ENCODE measurements at regions of chr3 and their contacts with region 1.

Region 1: DNA sequence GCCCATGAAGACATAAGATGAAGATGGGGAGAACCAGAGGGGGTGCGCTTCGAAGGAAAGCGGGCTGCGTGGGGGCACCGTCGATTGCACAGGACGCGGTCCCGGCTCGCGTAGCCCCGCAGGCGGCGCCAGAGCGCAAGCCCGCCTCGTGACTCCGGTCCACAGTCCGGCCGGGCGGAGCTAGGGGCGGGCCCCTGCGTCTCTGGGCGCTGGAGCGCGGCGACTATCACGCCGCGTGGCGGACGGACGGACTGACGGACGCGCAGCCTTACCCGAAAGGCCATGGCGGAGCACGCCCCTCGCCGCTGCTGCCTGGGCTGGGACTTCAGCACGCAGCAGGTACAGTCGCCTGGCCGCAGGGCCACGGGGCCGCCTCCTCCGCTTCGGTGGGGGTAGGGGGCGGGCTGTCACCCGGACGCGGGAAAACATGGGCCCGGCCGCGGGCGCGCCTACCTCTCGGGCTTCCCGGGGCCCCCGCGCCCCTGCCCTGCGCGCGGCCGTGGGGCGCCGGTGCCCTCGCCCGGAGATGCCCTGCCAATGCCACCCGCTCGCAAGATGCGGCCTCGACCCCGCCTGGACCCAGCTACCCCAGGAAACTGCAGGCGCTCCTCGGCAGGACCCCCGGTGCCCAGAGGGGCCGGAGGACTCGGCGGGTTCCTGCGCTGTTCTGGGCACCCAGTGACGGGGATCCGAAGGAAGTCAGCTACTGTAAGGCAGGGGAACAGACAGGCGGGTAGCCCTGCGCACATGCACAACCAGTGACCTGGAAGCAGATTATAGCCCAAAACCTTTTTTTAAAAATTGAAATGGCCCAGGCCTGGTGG is at the start of gene XYLB:
- DNase-seq: peak; percentile 54 to 77 (median 65)
- H3K4me3 ChIP-seq: peak within 1 kb of the TSS; percentile 59
- H3K4me3 Mint-ChIP-seq: peak within 1 kb of the TSS; percentile 74 to 93 (median 83)
- H3K27ac ChIP-seq: peak within 1 kb of the TSS; percentile 63
- H3K27ac Mint-ChIP-seq: peak within 1 kb of the TSS in 3 of 8 donors; percentile 45 to 81 (median 66)
- H3K4me1 ChIP-seq: no peaks in the 10 kb centered on the region
- H3K4me1 Mint-ChIP-seq: peaks cover 0 to 10% (median 2%) of the 10 kb centered on the region in 3 donors
- H3K27me3 ChIP-seq: no peaks in the 10 kb centered on the region
- H3K27me3 Mint-ChIP-seq: peaks cover 0 to 6% of the 10 kb centered on the region in 2 donors
- total RNA-seq, gene XYLB: 5.7 to 6.2 TPM

Region 2: GRCh38 chr3:37974121-37975083 is 372.4 kb before region 1 on chr3:
- CTCF ChIA-PET with region 1: interaction called, 13 read pairs
- POLR2A ChIA-PET with region 1: no interaction called
- DNase-seq: peak; percentile 56 to 80 (median 60)
- H3K4me3 ChIP-seq: no peak overlapping the region
- H3K4me3 Mint-ChIP-seq: no peak overlapping the region
- H3K27ac ChIP-seq: no peak overlapping the region
- H3K27ac Mint-ChIP-seq: peak overlapping the region in 2 of 8 donors; percentile 22 to 52
- H3K4me1 ChIP-seq: no peaks in the 10 kb centered on the region
- H3K4me1 Mint-ChIP-seq: peaks cover 4 to 5% (median 4%) of the 10 kb centered on the region in 3 donors
- H3K27me3 ChIP-seq: no peaks in the 10 kb centered on the region
- H3K27me3 Mint-ChIP-seq: peaks cover 0 to 1% of the 10 kb centered on the region in 2 donors

Region 3: GRCh38 chr3:38210141-38210757 is 136.6 kb before region 1 on chr3:
- CTCF ChIA-PET with region 1: no interaction called
- POLR2A ChIA-PET with region 1: no interaction called
- DNase-seq: no peak
- H3K4me3 ChIP-seq: no peak overlapping the region
- H3K4me3 Mint-ChIP-seq: peak overlapping the region in 5 of 7 donors; percentile 7 to 47 (median 38)
- H3K27ac ChIP-seq: no peak overlapping the region
- H3K27ac Mint-ChIP-seq: peak overlapping the region in 6 of 8 donors; percentile 10 to 82 (median 54)
- H3K4me1 ChIP-seq: no peaks in the 10 kb centered on the region
- H3K4me1 Mint-ChIP-seq: peaks cover 51 to 86% (median 78%) of the 10 kb centered on the region in 3 donors
- H3K27me3 ChIP-seq: no peaks in the 10 kb centered on the region
- H3K27me3 Mint-ChIP-seq: no peaks in the 10 kb centered on the region

Region 4: DNA sequence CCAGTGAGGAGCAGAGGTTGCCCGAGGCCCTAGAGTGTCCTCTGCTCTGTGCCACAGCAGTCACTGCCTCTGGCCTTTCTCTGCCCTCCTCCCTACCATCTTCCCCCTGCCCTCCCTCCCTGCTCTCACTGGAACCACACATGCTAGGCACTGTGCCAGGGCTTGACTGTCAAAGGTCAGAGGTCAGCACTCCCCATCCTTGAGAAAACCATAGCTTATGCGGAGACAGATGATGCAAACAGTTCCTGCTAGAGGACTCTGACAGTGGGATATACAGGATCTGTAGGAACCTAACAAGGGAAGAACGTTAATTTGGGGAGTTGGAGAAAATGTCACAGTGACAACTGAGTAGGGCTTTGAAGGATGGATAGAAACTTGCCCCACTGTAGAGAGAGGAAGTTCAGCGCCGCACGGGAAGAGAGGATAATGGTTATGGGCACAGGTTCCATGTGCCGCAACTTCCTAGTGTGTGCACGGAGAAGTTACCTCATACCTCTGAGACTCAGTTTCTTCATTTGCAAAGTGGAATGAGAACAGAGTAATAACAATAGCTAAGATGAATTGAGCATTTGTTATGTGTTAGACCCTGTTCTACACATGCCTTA is 29.5 kb before region 1 on chr3:
- CTCF ChIA-PET with region 1: no interaction called
- POLR2A ChIA-PET with region 1: no interaction called
- DNase-seq: no peak
- H3K4me3 ChIP-seq: no peak overlapping the region
- H3K4me3 Mint-ChIP-seq: no peak overlapping the region
- H3K27ac ChIP-seq: no peak overlapping the region
- H3K27ac Mint-ChIP-seq: peak overlapping the region in 1 of 8 donors; percentile 55
- H3K4me1 ChIP-seq: no peaks in the 10 kb centered on the region
- H3K4me1 Mint-ChIP-seq: no peaks in the 10 kb centered on the region
- H3K27me3 ChIP-seq: no peaks in the 10 kb centered on the region
- H3K27me3 Mint-ChIP-seq: peaks cover 1 to 7% of the 10 kb centered on the region in 2 donors

Region 5: DNA sequence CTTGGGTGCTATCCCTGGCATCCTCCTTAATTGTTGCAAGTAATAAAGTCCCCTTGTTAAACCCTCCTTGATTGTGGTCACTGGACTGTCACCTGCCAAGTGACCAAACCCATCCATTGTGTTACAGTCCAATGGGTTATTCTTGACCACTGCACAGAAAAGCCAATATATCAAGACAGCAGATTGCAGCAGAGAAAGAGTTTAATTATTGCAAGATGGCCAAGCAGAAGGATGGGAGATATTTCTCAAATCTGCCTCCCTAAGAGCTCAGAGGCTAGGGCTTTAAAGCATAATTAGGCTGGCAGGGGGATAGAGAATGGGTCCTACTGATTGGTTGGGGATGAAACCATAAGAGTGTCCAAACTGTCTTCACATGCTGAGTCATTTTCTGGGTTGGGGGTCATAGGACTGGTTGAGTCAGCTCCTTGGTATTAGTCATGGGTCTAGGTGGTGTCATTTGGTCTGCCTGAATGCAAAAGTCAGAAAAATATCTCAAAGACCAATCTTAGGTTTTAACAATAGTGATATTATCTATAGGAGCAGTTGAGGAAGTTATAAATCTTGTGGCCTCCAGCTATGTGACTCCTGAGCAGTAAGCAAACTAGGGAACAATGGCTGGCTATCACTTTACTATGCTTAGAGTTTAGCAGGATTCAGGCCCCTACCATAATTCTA is 19.3 kb before region 1 on chr3:
- CTCF ChIA-PET with region 1: interaction called, 20 read pairs
- POLR2A ChIA-PET with region 1: no interaction called
- DNase-seq: no peak
- H3K4me3 ChIP-seq: no peak overlapping the region
- H3K4me3 Mint-ChIP-seq: no peak overlapping the region
- H3K27ac ChIP-seq: no peak overlapping the region
- H3K27ac Mint-ChIP-seq: no peak overlapping the region
- H3K4me1 ChIP-seq: no peaks in the 10 kb centered on the region
- H3K4me1 Mint-ChIP-seq: no peaks in the 10 kb centered on the region
- H3K27me3 ChIP-seq: no peaks in the 10 kb centered on the region
- H3K27me3 Mint-ChIP-seq: peaks cover 12 to 29% of the 10 kb centered on the region in 2 donors

Region 6: GRCh38 chr3:38454884-38455638 is 108.3 kb after region 1 on chr3:
- CTCF ChIA-PET with region 1: interaction called, 11 read pairs
- POLR2A ChIA-PET with region 1: no interaction called
- DNase-seq: peak in 4 of 5 donors; percentile 16 to 54 (median 38)
- H3K4me3 ChIP-seq: peak overlapping the region; percentile 47
- H3K4me3 Mint-ChIP-seq: peak overlapping the region; percentile 91 to 97 (median 96)
- H3K27ac ChIP-seq: peak overlapping the region; percentile 55
- H3K27ac Mint-ChIP-seq: peak overlapping the region in 5 of 8 donors; percentile 23 to 89 (median 55)
- H3K4me1 ChIP-seq: peaks cover 21% of the 10 kb centered on the region
- H3K4me1 Mint-ChIP-seq: peaks cover 13 to 32% (median 14%) of the 10 kb centered on the region in 3 donors
- H3K27me3 ChIP-seq: no peaks in the 10 kb centered on the region
- H3K27me3 Mint-ChIP-seq: peaks cover 7 to 15% of the 10 kb centered on the region in 2 donors

Region 7: DNA sequence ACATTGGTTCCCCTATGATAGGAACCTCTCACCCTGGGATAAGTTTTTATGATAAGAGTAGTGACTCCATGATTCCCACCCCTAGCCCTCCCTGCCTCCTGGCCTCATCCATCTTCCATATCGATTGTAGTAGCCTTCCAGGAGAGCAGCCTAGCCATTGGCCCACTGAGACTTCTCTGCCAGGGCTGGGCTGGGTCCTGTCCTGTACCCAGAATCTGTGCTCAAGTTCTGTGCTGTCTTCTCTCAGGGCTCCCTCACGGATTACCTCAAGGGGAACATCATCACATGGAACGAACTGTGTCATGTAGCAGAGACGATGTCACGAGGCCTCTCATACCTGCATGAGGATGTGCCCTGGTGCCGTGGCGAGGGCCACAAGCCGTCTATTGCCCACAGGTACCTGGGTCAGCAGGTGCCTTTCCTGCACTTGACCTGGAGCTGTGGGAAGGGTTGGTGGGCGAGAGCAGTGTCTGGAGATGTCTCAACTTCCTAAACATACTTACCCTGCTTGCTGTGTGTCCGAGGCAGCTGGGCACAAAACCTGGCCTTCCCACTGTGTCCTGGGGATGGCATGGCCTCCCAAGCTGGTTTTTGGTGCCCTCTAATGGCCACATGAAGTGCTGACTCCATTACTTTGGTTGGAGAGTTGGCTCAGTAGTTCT is 132.8 kb after region 1 on chr3:
- CTCF ChIA-PET with region 1: interaction called, 83 read pairs
- POLR2A ChIA-PET with region 1: no interaction called
- DNase-seq: peak in 4 of 5 donors; percentile 16 to 63 (median 36)
- H3K4me3 ChIP-seq: no peak overlapping the region
- H3K4me3 Mint-ChIP-seq: no peak overlapping the region
- H3K27ac ChIP-seq: no peak overlapping the region
- H3K27ac Mint-ChIP-seq: peak overlapping the region in 4 of 8 donors; percentile 24 to 90 (median 34)
- H3K4me1 ChIP-seq: no peaks in the 10 kb centered on the region
- H3K4me1 Mint-ChIP-seq: peaks cover 1 to 2% (median 1%) of the 10 kb centered on the region in 3 donors
- H3K27me3 ChIP-seq: no peaks in the 10 kb centered on the region
- H3K27me3 Mint-ChIP-seq: no peaks in the 10 kb centered on the region

Measured in CD8-positive, alpha-beta memory T cell (primary cell).